CD4-positive, alpha-beta memory T cell (primary cell): ENCODE measurements at regions of chr5 and their contacts with region 1.

Region 1: DNA sequence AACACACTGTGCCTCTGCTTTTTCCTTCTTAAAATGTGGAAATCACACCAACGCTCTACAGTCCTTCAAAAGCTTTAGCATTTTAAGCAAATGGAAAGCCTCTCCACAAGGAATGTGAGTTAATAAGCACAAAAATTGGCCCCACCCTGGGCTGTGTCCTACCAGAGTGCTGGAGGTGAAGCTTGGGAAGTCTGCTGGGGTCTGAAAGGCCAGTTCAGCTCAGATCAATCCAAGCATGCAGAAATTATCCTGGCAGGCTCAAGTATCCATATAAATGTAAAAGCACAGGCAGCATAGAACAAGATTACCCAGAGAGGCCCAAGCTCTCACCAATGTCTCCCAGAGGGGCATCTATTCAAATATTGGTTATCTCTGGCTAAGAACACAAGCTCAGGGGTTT is 98.5 kb downstream of the ESM1 start:
- DNase-seq: no peak
- H3K4me3 ChIP-seq: no peak overlapping the region
- H3K4me3 Mint-ChIP-seq: no peak overlapping the region
- H3K27ac ChIP-seq: no peak overlapping the region
- H3K27ac Mint-ChIP-seq: no peak overlapping the region
- H3K4me1 ChIP-seq: no peaks in the 10 kb centered on the region
- H3K4me1 Mint-ChIP-seq: peaks cover 5 to 9% (median 7%) of the 10 kb centered on the region in 4 donors
- H3K27me3 ChIP-seq: peaks cover 23% of the 10 kb centered on the region
- H3K27me3 Mint-ChIP-seq: peaks cover 37 to 59% of the 10 kb centered on the region in 2 donors

Region 2: DNA sequence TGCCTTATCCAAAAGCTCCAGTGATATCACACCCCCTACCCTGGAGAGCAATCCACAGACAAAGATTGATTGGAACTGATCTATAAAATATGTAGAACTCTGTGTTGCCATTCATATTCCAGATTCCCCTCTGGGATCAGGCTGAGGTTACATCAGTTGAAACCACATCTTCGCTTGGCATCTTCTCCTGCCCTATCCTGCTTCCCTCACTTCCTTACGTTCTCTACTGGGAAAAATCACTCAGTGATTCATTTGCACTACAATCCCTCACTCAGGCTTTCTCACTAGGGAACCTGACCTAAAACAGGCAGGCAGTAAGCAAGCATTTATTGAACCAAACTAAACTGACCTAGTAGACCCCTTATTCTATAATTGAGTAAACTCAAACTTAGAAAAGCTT is 13.2 kb before region 1 on chr5:
- CTCF ChIA-PET with region 1: interaction called, 11 read pairs
- POLR2A ChIA-PET with region 1: interaction called, 3 read pairs
- intact Hi-C with region 1: no loop called
- DNase-seq: no peak
- H3K4me3 ChIP-seq: no peak overlapping the region
- H3K4me3 Mint-ChIP-seq: no peak overlapping the region
- H3K27ac ChIP-seq: no peak overlapping the region
- H3K27ac Mint-ChIP-seq: no peak overlapping the region
- H3K4me1 ChIP-seq: no peaks in the 10 kb centered on the region
- H3K4me1 Mint-ChIP-seq: no peaks in the 10 kb centered on the region
- H3K27me3 ChIP-seq: peaks cover 3% of the 10 kb centered on the region
- H3K27me3 Mint-ChIP-seq: peaks cover 23% of the 10 kb centered on the region in 2 donors